Left colon (tissue), 2 donors: ENCODE measurements at regions of chr11 and their contacts with region 1.

Region 1: GRCh38 chr11:27485930-27486773 is 13.6 kb upstream of the LGR4 start:
- DNase-seq: no peak
- ATAC-seq: peak; percentile 65

Region 2: DNA sequence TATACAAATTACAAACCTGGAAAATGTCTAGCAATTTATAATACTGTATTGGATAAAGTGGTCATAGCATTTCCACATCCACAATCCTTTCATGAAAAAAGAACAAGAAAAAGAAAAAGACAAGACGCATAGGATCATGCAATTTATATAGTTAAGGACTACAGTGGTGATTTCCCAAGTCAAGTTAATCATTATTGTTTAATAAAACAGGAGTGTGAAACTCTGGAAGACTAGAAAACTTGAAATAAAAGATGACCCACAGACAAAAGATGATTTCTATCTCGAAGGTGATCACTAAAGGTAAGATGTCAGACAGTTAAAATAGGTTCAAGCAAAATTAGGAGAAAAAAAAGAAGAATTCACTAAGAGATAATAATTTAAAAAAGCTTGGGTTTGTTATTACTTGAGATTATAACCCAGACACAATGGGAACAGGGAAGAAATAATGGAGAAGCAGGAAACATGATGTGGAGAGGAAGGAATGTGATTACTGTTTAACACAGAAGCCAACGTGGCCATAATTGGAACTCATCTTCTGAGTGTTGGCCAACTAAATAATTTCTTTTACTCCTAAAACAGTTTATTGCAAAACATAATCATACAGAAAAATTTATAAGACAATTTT is 1595.4 kb before region 1 on chr11:
- intact Hi-C with region 1: no loop called
- DNase-seq: no peak
- ATAC-seq: no peak

Region 3: GRCh38 chr11:27183672-27184457 is 302.3 kb before region 1 on chr11:
- intact Hi-C with region 1: loop called (anchors 2 to 5 kb)
- DNase-seq: peak in 1 of 2 donors; percentile 69
- ATAC-seq: peak; percentile 33

Region 4: DNA sequence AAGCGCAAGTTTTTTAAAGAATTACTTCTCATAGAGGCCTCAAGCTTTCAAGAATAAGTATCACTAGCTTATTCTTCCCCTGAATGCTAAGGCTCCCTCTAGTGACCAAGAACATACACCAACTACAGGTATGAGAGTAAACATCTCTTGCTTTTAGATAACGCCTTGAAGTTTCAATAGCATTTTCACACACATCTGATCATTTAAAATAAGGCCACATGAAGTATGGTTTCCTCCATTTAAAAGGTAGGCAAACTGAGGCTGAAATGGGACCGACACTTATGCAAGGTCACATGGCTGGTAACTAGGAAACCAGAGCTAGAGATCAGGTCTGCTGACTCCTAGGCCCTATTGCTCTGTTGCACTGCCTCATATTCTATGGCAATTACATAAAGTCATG is 189.7 kb before region 1 on chr11:
- intact Hi-C with region 1: loop called in 1 of 2 experiments (anchors 5 kb)
- DNase-seq: no peak
- ATAC-seq: peak; percentile 31